ENCODE measurements at regions of chr1 and their contacts with region 1.

Region 1: DNA sequence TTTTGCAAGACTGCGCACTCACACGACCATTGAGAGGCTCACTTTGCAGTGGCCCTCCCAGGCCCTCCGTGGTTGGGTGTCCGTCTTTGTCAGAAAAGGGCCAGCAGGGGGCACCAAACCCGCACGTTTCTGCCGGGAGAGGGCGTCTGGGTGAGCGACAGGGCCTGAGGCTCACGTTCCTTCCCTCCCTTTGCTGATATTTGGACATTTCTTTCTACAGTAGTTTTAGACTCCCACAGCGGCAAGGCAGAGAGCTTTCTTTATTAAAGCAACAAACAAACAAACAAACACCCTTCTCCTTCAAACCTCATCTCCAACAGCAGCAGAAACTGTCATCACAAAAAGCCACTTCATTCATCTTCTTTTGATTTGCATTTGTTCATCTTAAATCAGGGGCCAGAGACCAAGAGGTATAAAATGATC is 79.2 kb upstream of the WDR26 start:
- DNase-seq: peak; percentile 65 to 88 (median 82)
- H3K4me3 ChIP-seq: no peak overlapping the region
- H3K27ac ChIP-seq: no peak overlapping the region
- H3K27me3 ChIP-seq: no peaks in the 10 kb centered on the region
- CTCF ChIP-seq: peak; percentile 81 to 100 (median 97)

Region 2: GRCh38 chr1:224644553-224645154 is 130.9 kb after region 1 on chr1:
- intact Hi-C with region 1: loop called in 1 of 2 experiments (anchors 5 kb)
- DNase-seq: peak in 3 of 10 donors; percentile 25 to 42 (median 39)
- H3K4me3 ChIP-seq: no peak overlapping the region
- H3K27ac ChIP-seq: no peak overlapping the region
- H3K27me3 ChIP-seq: no peaks in the 10 kb centered on the region
- CTCF ChIP-seq: peak; percentile 57 to 90 (median 80)

Region 3: DNA sequence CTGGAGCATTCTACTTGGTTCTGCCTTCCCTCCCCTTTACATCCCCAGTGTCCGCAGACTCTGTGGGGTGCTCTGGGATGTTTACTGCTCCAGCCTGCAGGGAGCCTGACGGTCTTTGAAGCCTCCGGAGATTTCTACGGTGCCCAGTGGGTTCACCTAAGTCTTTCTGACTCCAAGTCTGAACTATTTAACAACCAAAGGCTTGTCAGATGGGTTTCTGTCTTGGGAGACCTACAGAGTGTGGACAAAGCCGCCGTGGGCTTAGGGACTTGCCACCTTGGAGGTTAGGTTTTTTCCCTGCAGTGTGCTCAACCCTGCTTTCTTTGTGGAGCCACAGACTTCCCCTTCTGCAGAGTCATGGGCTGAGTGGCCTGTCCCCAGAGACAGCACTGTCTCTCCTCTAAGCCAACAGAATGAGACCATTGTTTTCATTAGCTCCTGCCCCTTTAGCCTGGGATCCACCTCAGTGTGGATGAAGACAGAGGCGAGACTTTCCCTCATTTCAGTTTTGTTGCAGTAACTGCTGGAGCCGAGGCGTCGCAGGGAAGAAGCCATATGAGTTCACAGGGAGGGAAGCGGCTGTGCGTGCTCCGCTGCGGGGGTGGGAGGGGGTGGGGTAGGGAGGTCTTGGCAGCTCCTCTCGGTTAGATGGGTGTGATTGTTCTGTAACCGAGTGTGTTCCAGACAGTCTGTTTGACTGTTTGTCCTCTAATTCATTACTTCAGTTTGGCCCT is 223.0 kb after region 1 on chr1:
- intact Hi-C with region 1: no loop called
- DNase-seq: peak in 5 of 10 donors; percentile 6 to 46 (median 24)
- H3K4me3 ChIP-seq: peak overlapping the region in 24 of 59 donors; percentile 1 to 36 (median 14)
- H3K27ac ChIP-seq: peak overlapping the region in 34 of 59 donors; percentile 7 to 71 (median 47)
- H3K27me3 ChIP-seq: no peaks in the 10 kb centered on the region
- CTCF ChIP-seq: no peak

Region 4: GRCh38 chr1:224851210-224851847 is 337.5 kb after region 1 on chr1:
- intact Hi-C with region 1: loop called (anchors 1 to 5 kb)
- DNase-seq: peak; percentile 41 to 69 (median 53)
- H3K4me3 ChIP-seq: no peak overlapping the region
- H3K27ac ChIP-seq: no peak overlapping the region
- H3K27me3 ChIP-seq: no peaks in the 10 kb centered on the region
- CTCF ChIP-seq: peak in 54 of 56 donors; percentile 30 to 71 (median 61)

Region 5: GRCh38 chr1:224914292-224914900 is 400.6 kb after region 1 on chr1:
- intact Hi-C with region 1: loop called in 1 of 2 experiments (anchors 10 kb)
- DNase-seq: no peak
- H3K4me3 ChIP-seq: no peak overlapping the region
- H3K27ac ChIP-seq: no peak overlapping the region
- H3K27me3 ChIP-seq: peaks cover 0 to 2% (median 0%) of the 10 kb centered on the region in 45 donors
- CTCF ChIP-seq: no peak

Region 6: DNA sequence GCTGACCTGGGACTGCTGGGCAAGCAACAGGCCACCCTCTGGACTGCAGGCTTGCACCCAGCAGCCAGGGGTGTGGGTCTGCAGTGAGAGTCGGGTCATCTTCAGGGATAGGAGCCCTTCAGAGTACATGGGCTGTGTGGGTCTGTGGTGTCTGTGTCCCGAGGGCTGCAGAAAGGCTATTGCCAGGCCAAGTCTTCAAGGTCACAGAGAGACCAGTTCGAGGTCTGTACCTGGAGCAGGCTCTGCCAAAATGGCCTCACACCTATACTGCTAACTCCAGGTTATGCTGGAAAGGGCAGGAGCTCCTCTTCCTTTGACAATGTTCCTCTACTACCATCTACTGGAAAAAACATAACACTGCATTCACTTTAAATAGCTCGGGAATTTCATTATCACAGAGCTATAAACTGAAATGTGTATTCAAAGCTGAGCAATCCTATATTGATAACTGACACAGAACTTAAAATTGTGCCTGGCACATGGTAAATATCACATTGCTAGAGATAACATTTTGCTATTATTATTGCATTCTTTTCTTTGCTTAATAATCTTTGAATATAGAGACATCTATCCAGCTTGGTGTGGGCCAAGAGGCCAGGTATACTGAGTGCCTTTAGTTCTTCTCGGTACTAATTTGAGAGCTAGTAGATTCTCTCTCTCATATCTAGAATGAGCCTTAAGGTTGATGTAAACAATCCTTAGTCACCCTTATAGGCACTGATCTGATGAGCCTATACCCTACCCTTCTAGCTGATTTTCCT is 408.8 kb after region 1 on chr1:
- intact Hi-C with region 1: loop called (anchors 2 to 10 kb)
- DNase-seq: peak in 1 of 10 donors; percentile 5
- H3K4me3 ChIP-seq: no peak overlapping the region
- H3K27ac ChIP-seq: no peak overlapping the region
- H3K27me3 ChIP-seq: no peaks in the 10 kb centered on the region
- CTCF ChIP-seq: peak; percentile 48 to 84 (median 71)